ENCODE measurements at regions of chr14 and their contacts with region 1.

Region 1: DNA sequence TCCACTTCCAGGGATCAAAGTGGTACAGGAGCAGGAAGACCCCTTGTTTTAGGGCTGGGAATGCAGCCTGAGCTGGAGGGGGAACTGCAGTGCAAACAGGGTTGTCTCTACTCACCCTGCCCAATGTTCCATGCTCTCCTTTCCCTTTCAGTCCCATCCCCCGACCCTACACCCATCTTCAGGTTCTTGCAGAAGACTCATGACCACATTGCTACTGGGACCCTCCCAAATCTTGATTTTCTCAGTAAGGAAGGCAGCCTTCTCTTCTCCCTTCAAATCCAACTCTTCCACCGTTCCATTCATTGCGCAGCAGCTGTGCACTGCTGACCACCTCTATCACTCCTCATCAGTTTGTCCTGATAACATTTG is 1.9 kb downstream of the SERPINA11 start:
- DNase-seq: no peak
- ATAC-seq: no peak
- H3K4me3 ChIP-seq: no peak overlapping the region
- H3K4me3 Mint-ChIP-seq: no peak overlapping the region
- H3K27ac ChIP-seq: no peak overlapping the region
- H3K27ac Mint-ChIP-seq: no peak overlapping the region
- H3K4me1 ChIP-seq: no peaks in the 10 kb centered on the region
- H3K4me1 Mint-ChIP-seq: no peaks in the 10 kb centered on the region
- H3K27me3 ChIP-seq: no peaks in the 10 kb centered on the region
- H3K27me3 Mint-ChIP-seq: peaks cover 43% of the 10 kb centered on the region
- CTCF ChIP-seq: no peak

Region 2: DNA sequence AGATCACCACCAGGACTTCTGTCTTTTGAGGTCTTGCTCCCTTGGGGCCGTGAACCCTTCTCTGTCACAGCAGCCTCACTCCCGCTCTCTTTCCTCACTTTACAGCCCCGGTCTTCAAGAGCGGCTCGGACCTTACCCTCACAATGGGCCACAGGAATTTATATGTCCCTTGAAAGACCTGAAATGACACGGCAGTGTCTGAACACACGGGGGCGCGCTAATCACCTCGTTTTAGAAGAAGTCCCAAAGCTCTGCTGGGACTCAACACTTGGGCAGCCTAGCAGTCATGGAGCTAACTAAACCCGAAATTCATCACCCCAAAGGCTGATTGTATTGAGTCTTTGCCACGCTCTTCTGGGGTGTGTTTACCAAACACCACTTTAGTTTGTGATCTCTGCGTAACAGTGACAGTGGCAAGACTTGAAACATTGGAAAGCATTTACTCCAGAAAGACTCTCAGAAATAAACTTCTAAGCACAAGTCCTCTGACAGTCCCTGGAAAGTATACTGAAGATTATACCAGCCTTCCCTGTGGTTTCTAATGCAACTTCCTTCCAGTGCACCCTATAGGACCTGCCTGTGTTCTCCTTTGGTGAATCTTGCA is 27.2 kb before region 1 on chr14:
- CTCF ChIA-PET with region 1: no interaction called
- POLR2A ChIA-PET with region 1: no interaction called
- intact Hi-C with region 1: loop called in 1 of 2 experiments (anchors 1 kb)
- DNase-seq: peak in 6 of 14 experiments; percentile 8 to 52 (median 24)
- ATAC-seq: no peak
- H3K4me3 ChIP-seq: no peak overlapping the region
- H3K4me3 Mint-ChIP-seq: peak overlapping the region; percentile 43
- H3K27ac ChIP-seq: no peak overlapping the region
- H3K27ac Mint-ChIP-seq: no peak overlapping the region
- H3K4me1 ChIP-seq: no peaks in the 10 kb centered on the region
- H3K4me1 Mint-ChIP-seq: peaks cover 5% of the 10 kb centered on the region
- H3K27me3 ChIP-seq: peaks cover 13 to 24% of the 10 kb centered on the region in 2 experiments
- H3K27me3 Mint-ChIP-seq: peaks cover 34% of the 10 kb centered on the region
- CTCF ChIP-seq: peak; percentile 37